Activated CD4-positive, alpha-beta T cell treated with anti-CD3 and anti-CD28 coated beads for 36 hours (primary cell): ENCODE measurements at regions of chr2 and their contacts with region 1.

Region 1: DNA sequence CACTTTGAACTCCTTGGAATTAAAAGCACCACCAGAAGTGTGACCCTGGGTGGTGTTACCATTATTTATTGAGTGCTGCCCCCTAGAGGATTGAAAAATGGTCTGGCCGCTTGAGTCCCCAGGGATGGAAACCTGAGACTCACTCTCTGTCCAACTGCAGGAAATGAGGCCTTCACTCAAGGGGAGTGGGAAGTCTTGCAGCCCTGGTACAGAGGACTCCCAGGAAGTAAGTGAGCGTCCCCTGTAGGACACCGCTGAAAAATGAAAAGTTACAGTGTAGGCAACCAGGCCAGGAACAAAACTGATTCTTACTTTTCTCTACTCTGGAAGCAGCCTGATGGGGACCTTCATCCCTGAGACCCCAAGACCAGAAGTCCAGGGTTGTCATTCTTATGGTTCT is 2.2 kb upstream of the NRP2 start:
- DNase-seq: peak; percentile 67
- ATAC-seq: peak; percentile 63
- H3K4me3 Mint-ChIP-seq: no peak overlapping the region
- H3K27ac Mint-ChIP-seq: no peak overlapping the region
- H3K4me1 Mint-ChIP-seq: peaks cover 15% of the 10 kb centered on the region
- H3K27me3 Mint-ChIP-seq: peaks cover 39% of the 10 kb centered on the region

Region 2: GRCh38 chr2:204260162-204260877 is 1419.7 kb before region 1 on chr2:
- CTCF ChIA-PET with region 1: no interaction called
- POLR2A ChIA-PET with region 1: no interaction called
- intact Hi-C with region 1: loop called in 1 of 2 experiments (anchors 1 kb)
- DNase-seq: peak; percentile 67
- ATAC-seq: peak; percentile 51
- H3K4me3 Mint-ChIP-seq: no peak overlapping the region
- H3K27ac Mint-ChIP-seq: no peak overlapping the region
- H3K4me1 Mint-ChIP-seq: no peaks in the 10 kb centered on the region
- H3K27me3 Mint-ChIP-seq: peaks cover 19% of the 10 kb centered on the region

Region 3: DNA sequence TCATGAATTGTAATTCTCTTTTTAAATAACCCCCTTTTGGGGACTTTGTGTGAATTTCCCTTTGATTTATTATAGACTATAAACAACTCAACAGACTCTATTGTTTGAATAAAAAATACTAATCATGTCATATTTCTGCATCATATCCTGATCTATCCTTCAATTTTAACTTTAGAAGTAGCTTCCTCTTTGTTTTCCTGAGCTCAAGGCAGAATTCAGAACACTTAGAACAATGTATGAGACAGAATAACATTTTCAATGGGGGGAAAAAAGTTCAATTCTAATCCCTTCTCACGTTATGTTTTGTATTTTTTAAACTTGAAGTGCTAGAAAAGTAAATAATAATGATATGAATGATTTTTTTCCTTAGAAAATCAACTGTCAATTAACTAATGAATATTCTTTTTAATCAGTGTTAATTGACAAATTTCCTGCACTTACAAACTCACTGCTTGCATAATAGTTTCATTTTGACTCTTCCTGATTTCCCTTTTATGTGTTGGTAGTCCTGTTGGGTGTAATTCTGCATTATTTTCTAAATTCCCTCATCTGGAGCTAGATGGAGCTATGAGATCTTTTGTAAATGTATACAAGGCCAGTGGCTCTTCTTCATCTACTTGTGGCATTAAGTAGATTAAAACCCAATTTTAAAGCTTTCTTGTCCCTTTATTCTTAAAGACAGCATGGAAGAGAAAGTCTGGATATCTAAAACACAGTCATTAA is 808.7 kb before region 1 on chr2:
- CTCF ChIA-PET with region 1: no interaction called
- POLR2A ChIA-PET with region 1: no interaction called
- intact Hi-C with region 1: loop called (anchors 1 to 5 kb)
- DNase-seq: no peak
- ATAC-seq: peak; percentile 64
- H3K4me3 Mint-ChIP-seq: no peak overlapping the region
- H3K27ac Mint-ChIP-seq: no peak overlapping the region
- H3K4me1 Mint-ChIP-seq: peaks cover 28% of the 10 kb centered on the region
- H3K27me3 Mint-ChIP-seq: no peaks in the 10 kb centered on the region

Region 4: DNA sequence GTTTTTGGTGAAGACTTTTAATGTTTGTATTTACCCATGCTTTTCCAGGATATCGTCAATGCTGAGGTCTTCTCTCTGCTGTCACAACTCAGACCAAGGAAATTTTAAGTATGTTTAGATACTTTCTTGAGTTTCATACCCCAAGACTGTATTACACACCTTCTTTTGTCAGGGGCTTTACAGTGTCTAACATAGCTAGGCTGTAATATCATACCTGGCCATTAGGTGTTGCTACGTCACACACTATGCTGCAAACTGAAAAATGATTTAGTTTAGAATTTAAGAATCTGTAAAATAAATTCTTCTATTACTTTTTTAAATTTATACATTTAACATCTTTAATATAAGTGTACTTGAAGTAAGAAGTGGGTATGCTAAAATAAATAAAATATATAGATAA is 356.1 kb before region 1 on chr2:
- CTCF ChIA-PET with region 1: interaction called, 16 read pairs
- POLR2A ChIA-PET with region 1: no interaction called
- intact Hi-C with region 1: loop called (anchors 1 to 2 kb)
- DNase-seq: no peak
- ATAC-seq: no peak
- H3K4me3 Mint-ChIP-seq: no peak overlapping the region
- H3K27ac Mint-ChIP-seq: no peak overlapping the region
- H3K4me1 Mint-ChIP-seq: no peaks in the 10 kb centered on the region
- H3K27me3 Mint-ChIP-seq: peaks cover 3% of the 10 kb centered on the region

Region 5: DNA sequence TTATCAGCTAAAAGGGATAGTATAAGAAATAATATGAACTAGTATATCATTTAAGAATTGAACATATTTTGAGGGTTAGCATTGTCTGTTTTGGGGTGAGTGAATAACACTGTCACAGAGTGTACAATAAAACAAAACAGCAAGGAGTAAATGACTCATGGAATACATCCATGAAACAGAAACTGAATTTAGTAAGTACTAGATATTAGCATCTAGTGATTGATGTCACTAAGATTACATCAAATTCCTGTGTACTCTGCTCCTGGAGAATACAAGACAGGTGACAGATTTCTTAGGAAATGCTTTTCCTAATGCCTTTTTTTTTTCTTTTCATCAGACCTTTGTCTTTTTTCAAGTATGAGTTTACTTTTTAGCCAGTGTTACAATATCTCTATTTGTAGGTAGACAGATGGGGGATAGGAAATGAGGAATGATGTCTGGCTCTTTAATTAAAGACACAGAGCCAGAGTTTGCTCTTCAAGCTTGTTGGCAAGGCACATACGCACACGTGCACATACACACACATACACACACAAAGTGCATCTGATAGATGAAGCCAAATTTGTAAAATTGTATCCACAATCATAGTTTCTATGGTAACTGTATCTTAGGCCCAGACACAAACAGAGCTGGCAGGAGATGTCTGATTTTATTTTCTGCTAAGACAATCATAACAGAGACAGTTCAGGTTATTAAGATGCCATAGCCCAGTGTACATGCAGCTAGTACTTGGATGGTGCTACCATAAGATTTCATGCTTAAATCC is 135.9 kb before region 1 on chr2:
- CTCF ChIA-PET with region 1: interaction called, 5 read pairs
- POLR2A ChIA-PET with region 1: no interaction called
- intact Hi-C with region 1: loop called in 1 of 2 experiments (anchors 10 kb)
- DNase-seq: no peak
- ATAC-seq: peak; percentile 80
- H3K4me3 Mint-ChIP-seq: no peak overlapping the region
- H3K27ac Mint-ChIP-seq: no peak overlapping the region
- H3K4me1 Mint-ChIP-seq: peaks cover 29% of the 10 kb centered on the region
- H3K27me3 Mint-ChIP-seq: no peaks in the 10 kb centered on the region

Region 6: GRCh38 chr2:205596581-205596980 is 83.5 kb before region 1 on chr2:
- CTCF ChIA-PET with region 1: interaction called, 4 read pairs
- POLR2A ChIA-PET with region 1: interaction called, 3 read pairs
- intact Hi-C with region 1: loop called in 1 of 2 experiments (anchors 5 kb)
- DNase-seq: no peak
- ATAC-seq: no peak
- H3K4me3 Mint-ChIP-seq: no peak overlapping the region
- H3K27ac Mint-ChIP-seq: no peak overlapping the region
- H3K4me1 Mint-ChIP-seq: no peaks in the 10 kb centered on the region
- H3K27me3 Mint-ChIP-seq: no peaks in the 10 kb centered on the region

Region 7: DNA sequence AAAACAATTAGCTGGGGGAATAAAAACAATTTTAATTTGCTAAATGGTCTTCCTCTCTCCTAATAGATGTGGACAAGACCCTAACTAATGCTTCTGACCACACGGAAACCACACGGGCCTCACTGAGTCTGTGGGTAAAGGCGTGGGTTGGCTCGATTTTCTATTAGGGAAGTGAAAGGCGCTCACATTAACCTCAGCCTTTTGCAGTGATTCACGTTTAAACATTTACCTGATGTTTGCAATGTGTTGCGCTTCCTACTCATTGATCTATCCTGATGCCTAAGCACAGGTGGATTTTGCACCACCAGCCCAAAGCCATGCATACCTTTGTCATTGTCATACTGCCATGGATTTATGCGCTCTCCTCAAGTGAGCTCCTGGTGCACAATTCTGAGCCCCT is 33.4 kb before region 1 on chr2:
- CTCF ChIA-PET with region 1: no interaction called
- POLR2A ChIA-PET with region 1: no interaction called
- intact Hi-C with region 1: no loop called
- DNase-seq: no peak
- ATAC-seq: no peak
- H3K4me3 Mint-ChIP-seq: no peak overlapping the region
- H3K27ac Mint-ChIP-seq: no peak overlapping the region
- H3K4me1 Mint-ChIP-seq: no peaks in the 10 kb centered on the region
- H3K27me3 Mint-ChIP-seq: peaks cover 7% of the 10 kb centered on the region

Region 8: DNA sequence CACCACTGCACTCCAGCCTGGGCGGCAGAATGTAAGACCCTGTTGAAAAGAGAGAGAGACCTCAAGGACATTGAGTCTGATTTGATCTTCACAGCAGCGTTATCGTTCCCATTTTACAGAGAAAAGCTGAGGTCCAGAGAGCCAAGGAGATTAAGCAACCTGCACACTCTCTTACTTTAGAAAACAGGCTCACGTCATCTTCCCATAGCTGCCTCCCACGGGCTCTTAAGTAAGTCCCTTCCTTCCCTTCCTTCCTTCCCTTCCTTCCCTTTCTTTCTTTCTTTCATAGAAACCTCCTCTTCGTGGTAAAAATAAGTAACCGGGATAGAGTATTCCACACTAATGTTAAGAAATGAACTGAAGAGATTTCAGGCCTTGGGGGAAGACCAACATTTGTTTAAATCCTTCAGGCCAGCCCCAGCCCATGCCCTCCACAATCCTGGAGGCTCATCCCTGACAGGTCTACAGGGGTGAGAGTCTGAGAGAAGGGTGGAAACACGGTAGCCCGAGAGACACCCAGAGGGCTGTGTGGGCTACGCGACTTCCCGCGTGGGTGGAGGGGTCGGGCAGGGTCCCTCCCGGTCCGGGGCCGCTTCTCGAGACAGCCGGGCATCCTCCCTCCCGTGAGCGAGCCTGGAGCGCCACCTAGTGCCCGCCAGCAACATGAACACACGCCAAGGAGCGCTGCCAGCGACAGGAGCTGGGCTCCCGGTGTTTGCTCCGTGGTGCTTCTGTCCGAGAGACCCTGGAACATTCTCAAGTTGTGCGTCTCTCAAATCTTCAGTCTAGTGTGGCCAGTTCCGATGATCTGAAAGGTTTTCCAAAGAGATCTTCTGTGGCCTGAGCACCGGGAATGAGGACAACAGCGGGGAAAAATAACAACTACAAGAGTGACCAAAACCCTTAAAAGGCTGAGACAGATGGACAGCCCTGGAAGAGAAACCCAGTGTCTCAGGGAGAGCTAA is 245.6 kb after region 1 on chr2:
- CTCF ChIA-PET with region 1: interaction called, 3 read pairs
- POLR2A ChIA-PET with region 1: no interaction called
- intact Hi-C with region 1: loop called in 1 of 2 experiments (anchors 5 kb)
- DNase-seq: peak; percentile 88
- ATAC-seq: peak; percentile 98
- H3K4me3 Mint-ChIP-seq: no peak overlapping the region
- H3K27ac Mint-ChIP-seq: no peak overlapping the region
- H3K4me1 Mint-ChIP-seq: peaks cover 7% of the 10 kb centered on the region
- H3K27me3 Mint-ChIP-seq: peaks cover 45% of the 10 kb centered on the region